Activated T-helper 2 cell treated with anti-CD3 and anti-CD28 coated beads, Interferon-gamma antibody, Interleukin-2, Interleukin-4, amounts not matched to agents 10 μg/mL and 5 μg/mL and 100 μg/mL, durations not matched to agents 14 hours and 24 hours and 36 hours (primary cell): ENCODE measurements at regions of chr5 and their contacts with region 1.

Region 1: GRCh38 chr5:5492087-5492933 is 69.8 kb downstream of the ICE1 start:
- DNase-seq: peak; percentile 33
- H3K4me3 Mint-ChIP-seq: peak overlapping the region; percentile 43
- H3K27ac Mint-ChIP-seq: no peak overlapping the region
- H3K4me1 Mint-ChIP-seq: peaks cover 10% of the 10 kb centered on the region
- H3K27me3 Mint-ChIP-seq: peaks cover 12% of the 10 kb centered on the region

Region 2: GRCh38 chr5:5374009-5374715 is 118.1 kb before region 1 on chr5:
- intact Hi-C with region 1: no loop called
- DNase-seq: no peak
- H3K4me3 Mint-ChIP-seq: no peak overlapping the region
- H3K27ac Mint-ChIP-seq: no peak overlapping the region
- H3K4me1 Mint-ChIP-seq: no peaks in the 10 kb centered on the region
- H3K27me3 Mint-ChIP-seq: no peaks in the 10 kb centered on the region

Region 3: DNA sequence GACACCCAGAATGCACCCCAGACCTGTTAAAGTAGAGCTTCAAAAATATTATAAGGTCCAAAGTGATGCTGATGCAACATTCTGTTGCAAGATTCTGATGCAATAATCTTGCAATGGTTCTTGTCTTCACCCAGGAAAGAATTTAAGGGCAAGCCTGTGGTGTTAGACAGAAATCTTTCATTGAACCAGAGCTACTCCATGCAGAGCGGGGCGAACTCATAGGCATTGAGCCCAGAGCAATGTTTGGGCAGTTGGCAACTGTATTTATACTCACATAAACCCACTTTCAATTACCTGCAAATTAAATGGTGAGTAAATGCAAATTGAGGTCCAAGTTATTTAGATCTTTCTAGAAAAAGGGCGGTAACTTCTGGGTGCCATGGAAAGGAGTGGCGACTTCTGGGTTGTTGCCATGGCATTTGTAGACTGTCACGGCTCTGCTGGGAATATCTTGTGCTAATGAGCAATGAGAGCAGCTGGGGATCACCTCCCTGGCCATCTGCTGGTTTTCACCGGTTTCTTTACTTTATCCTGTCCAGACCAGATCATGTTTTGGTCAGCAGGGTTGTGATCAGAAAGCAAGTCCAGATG is 93.5 kb after region 1 on chr5:
- intact Hi-C with region 1: no loop called
- DNase-seq: no peak
- H3K4me3 Mint-ChIP-seq: no peak overlapping the region
- H3K27ac Mint-ChIP-seq: no peak overlapping the region
- H3K4me1 Mint-ChIP-seq: no peaks in the 10 kb centered on the region
- H3K27me3 Mint-ChIP-seq: no peaks in the 10 kb centered on the region

Region 4: GRCh38 chr5:5649641-5650040 is 157.3 kb after region 1 on chr5:
- intact Hi-C with region 1: loop called (anchors 10 kb)
- DNase-seq: no peak
- H3K4me3 Mint-ChIP-seq: no peak overlapping the region
- H3K27ac Mint-ChIP-seq: no peak overlapping the region
- H3K4me1 Mint-ChIP-seq: no peaks in the 10 kb centered on the region
- H3K27me3 Mint-ChIP-seq: no peaks in the 10 kb centered on the region

Region 5: DNA sequence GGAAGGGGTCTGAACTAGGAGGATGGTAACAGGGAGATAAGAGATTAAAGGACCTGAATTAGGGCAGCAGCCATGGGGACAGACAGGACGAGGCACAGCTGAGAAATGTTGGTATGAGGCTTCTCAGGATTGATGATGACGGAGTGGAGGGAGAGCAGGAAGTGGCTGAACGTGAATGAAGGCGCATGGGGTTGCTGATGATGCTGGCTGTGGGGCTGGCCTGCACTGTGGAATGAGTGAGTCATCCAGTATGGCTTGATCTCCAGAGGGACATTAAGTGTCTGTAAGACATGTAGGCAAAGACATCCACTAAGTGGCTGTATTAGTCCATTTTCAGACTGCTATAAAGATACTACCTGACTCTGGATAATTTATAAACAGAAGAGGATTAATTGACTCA is 186.6 kb after region 1 on chr5:
- intact Hi-C with region 1: loop called (anchors 10 kb)
- DNase-seq: no peak
- H3K4me3 Mint-ChIP-seq: no peak overlapping the region
- H3K27ac Mint-ChIP-seq: no peak overlapping the region
- H3K4me1 Mint-ChIP-seq: no peaks in the 10 kb centered on the region
- H3K27me3 Mint-ChIP-seq: no peaks in the 10 kb centered on the region

Region 6: GRCh38 chr5:5886812-5887486 is 394.6 kb after region 1 on chr5:
- intact Hi-C with region 1: loop called (anchors 10 kb)
- DNase-seq: peak; percentile 34
- H3K4me3 Mint-ChIP-seq: no peak overlapping the region
- H3K27ac Mint-ChIP-seq: no peak overlapping the region
- H3K4me1 Mint-ChIP-seq: peaks cover 2% of the 10 kb centered on the region
- H3K27me3 Mint-ChIP-seq: no peaks in the 10 kb centered on the region

Region 7: DNA sequence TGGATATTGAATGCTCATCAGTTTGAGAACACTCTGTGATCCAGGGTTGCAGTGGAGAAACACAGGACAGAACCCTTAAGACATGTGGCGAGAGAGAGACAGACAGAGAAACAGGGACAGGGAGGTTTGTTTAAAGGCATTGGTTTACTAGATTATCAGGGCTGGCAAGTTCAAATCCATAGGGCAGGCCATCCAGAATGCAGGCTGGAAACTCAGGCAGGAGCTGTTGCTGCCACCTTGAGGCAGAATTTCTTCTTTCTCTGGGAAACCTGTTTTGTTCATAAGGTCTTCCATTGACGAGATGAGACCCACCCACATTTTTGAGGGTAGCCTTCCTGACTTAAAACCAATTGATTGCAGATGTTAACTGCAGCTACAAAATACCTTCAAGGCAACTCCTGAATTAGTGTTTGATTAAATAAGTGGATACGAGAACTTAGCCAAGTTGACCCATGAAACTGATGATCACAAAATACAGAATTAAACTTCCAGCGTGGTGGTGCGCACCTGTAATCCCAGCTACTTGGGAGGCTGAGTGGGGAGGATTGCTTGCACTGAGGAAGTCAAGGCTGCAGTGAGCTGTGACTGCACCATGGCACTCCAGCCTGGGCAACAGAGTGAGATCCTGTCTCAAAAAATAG is 1084.7 kb after region 1 on chr5:
- intact Hi-C with region 1: loop called (anchors 5 kb)
- DNase-seq: no peak
- H3K4me3 Mint-ChIP-seq: no peak overlapping the region
- H3K27ac Mint-ChIP-seq: no peak overlapping the region
- H3K4me1 Mint-ChIP-seq: no peaks in the 10 kb centered on the region
- H3K27me3 Mint-ChIP-seq: peaks cover 25% of the 10 kb centered on the region